Transverse colon (tissue), 4 donors: ENCODE measurements at regions of chr5 and their contacts with region 1.

Region 1: GRCh38 chr5:83964271-83964670 is 243.6 kb upstream of the HAPLN1 start:
- DNase-seq: no peak
- H3K4me3 ChIP-seq: no peak overlapping the region
- H3K27ac ChIP-seq: no peak overlapping the region
- H3K4me1 ChIP-seq: no peaks in the 10 kb centered on the region
- H3K27me3 ChIP-seq: no peaks in the 10 kb centered on the region
- CTCF ChIP-seq: no peak
- EP300 ChIP-seq: no peak
- POLR2A ChIP-seq: no peak

Region 2: DNA sequence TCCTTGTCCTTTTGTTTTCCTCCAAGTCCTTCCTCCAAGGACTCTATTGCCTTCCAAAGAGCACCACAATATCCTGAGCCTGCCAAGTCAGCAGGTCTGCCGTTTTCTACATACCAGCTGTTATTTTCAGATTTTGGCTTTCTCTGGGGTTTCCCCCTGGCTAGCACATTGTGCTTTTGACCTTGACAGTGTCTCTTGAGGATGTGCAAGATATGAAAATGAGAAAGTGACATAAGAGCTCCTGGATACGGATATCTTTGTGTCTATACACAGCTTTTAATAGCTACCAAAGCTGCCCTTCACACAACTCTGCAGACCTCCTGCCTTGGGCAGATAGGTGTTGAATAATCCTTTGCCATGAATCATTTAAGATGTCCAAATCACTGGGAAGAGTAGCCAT is 310.6 kb before region 1 on chr5:
- in situ Hi-C with region 1: no loop called
- intact Hi-C with region 1: no loop called
- DNase-seq: no peak
- H3K4me3 ChIP-seq: no peak overlapping the region
- H3K27ac ChIP-seq: no peak overlapping the region
- H3K4me1 ChIP-seq: no peaks in the 10 kb centered on the region
- H3K27me3 ChIP-seq: no peaks in the 10 kb centered on the region
- CTCF ChIP-seq: no peak
- EP300 ChIP-seq: no peak
- POLR2A ChIP-seq: no peak

Region 3: GRCh38 chr5:84816746-84817547 is 852.7 kb after region 1 on chr5:
- in situ Hi-C with region 1: no loop called
- intact Hi-C with region 1: loop called (anchors 5 kb)
- DNase-seq: no peak
- H3K4me3 ChIP-seq: no peak overlapping the region
- H3K27ac ChIP-seq: no peak overlapping the region
- H3K4me1 ChIP-seq: no peaks in the 10 kb centered on the region
- H3K27me3 ChIP-seq: no peaks in the 10 kb centered on the region
- CTCF ChIP-seq: no peak
- EP300 ChIP-seq: no peak
- POLR2A ChIP-seq: no peak